IMR-90 (cell line): ENCODE measurements at regions of chr1 and their contacts with region 1.

Region 1: DNA sequence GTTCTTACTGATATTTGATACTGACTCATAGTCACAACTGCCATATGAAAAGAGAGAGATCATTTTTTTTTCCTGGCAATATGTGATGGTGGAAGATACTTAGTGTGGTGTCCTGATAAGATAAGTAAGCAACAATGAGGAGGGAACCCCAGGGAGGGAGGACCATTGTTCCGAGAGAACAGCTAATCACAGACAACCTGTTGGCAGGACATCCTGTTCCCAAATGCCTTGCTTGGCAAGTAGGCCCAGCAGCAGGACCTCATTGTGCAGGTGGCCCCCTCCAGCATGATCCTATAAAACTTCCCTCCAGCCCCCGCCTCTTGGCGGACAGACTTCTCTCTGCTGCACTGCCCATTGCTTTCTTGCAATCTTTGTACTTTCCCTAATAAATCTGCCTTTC is 329.4 kb upstream of the CHRM3 start:
- DNase-seq: no peak
- ATAC-seq: no peak
- H3K4me3 ChIP-seq: no peak overlapping the region
- H3K27ac ChIP-seq: no peak overlapping the region
- H3K4me1 ChIP-seq: no peaks in the 10 kb centered on the region
- H3K27me3 ChIP-seq: no peaks in the 10 kb centered on the region
- CTCF ChIP-seq: no peak
- POLR2A ChIP-seq: no peak
- RAD21 ChIP-seq: no peak

Region 2: GRCh38 chr1:239040523-239040922 is 16.4 kb before region 1 on chr1:
- CTCF ChIA-PET with region 1: no interaction called
- POLR2A ChIA-PET with region 1: interaction called, 11 read pairs
- dilution Hi-C with region 1: no loop called
- in situ Hi-C with region 1: no loop called
- intact Hi-C with region 1: no loop called
- DNase-seq: no peak
- ATAC-seq: no peak
- H3K4me3 ChIP-seq: no peak overlapping the region
- H3K27ac ChIP-seq: no peak overlapping the region
- H3K4me1 ChIP-seq: no peaks in the 10 kb centered on the region
- H3K27me3 ChIP-seq: no peaks in the 10 kb centered on the region
- CTCF ChIP-seq: no peak
- POLR2A ChIP-seq: no peak
- RAD21 ChIP-seq: no peak